Endothelial cell of umbilical vein (primary cell): ENCODE measurements at regions of chr14 and their contacts with region 1.

Region 1: GRCh38 chr14:90903101-90903500 is 86.9 kb upstream of the TTC7B start:
- DNase-seq: peak; percentile 72
- H3K4me3 ChIP-seq: no peak overlapping the region
- H3K27ac ChIP-seq: no peak overlapping the region
- H3K4me1 ChIP-seq: no peaks in the 10 kb centered on the region
- H3K27me3 ChIP-seq: no peaks in the 10 kb centered on the region
- CTCF ChIP-seq: peak; percentile 59 to 66
- POLR2A ChIP-seq: no peak

Region 2: GRCh38 chr14:90301668-90302090 is 601.4 kb before region 1 on chr14:
- CTCF ChIA-PET with region 1: interaction called, 19 read pairs
- POLR2A ChIA-PET with region 1: no interaction called
- dilution Hi-C with region 1: no loop called
- intact Hi-C with region 1: no loop called
- DNase-seq: peak; percentile 76
- H3K4me3 ChIP-seq: no peak overlapping the region
- H3K27ac ChIP-seq: no peak overlapping the region
- H3K4me1 ChIP-seq: no peaks in the 10 kb centered on the region
- H3K27me3 ChIP-seq: no peaks in the 10 kb centered on the region
- CTCF ChIP-seq: peak; percentile 22 to 41
- POLR2A ChIP-seq: no peak

Region 3: GRCh38 chr14:90815822-90816700 is 87.0 kb before region 1 on chr14 and contains the start of gene TTC7B:
- CTCF ChIA-PET with region 1: interaction called, 10 read pairs
- POLR2A ChIA-PET with region 1: no interaction called
- dilution Hi-C with region 1: no loop called
- intact Hi-C with region 1: no loop called
- DNase-seq: no peak
- H3K4me3 ChIP-seq: peak within 1 kb of the TSS; percentile 70 to 95 (median 94)
- H3K27ac ChIP-seq: peak within 1 kb of the TSS; percentile 41
- H3K4me1 ChIP-seq: peaks cover 9% of the 10 kb centered on the region
- H3K27me3 ChIP-seq: no peaks in the 10 kb centered on the region
- CTCF ChIP-seq: peak in 1 of 2 donors; percentile 47
- POLR2A ChIP-seq: no peak
- total RNA-seq, gene TTC7B: 76.5 and 86.4 TPM in 2 replicates

Region 4: GRCh38 chr14:91060351-91061055 is 157.4 kb after region 1 on chr14 and contains the start of gene RPS6KA5:
- CTCF ChIA-PET with region 1: interaction called, 43 read pairs
- POLR2A ChIA-PET with region 1: no interaction called
- dilution Hi-C with region 1: no loop called
- intact Hi-C with region 1: loop called (anchors 1 kb)
- DNase-seq: peak; percentile 100
- H3K4me3 ChIP-seq: peak within 1 kb of the TSS; percentile 68 to 100 (median 71)
- H3K27ac ChIP-seq: peak within 1 kb of the TSS; percentile 75
- H3K4me1 ChIP-seq: peaks cover 22% of the 10 kb centered on the region
- H3K27me3 ChIP-seq: no peaks in the 10 kb centered on the region
- CTCF ChIP-seq: no peak
- POLR2A ChIP-seq: peak; percentile 41
- total RNA-seq, gene RPS6KA5: 5.4 and 8.8 TPM in 2 replicates

Region 5: GRCh38 chr14:91138511-91139359 is 235.6 kb after region 1 on chr14:
- CTCF ChIA-PET with region 1: interaction called, 37 read pairs
- POLR2A ChIA-PET with region 1: no interaction called
- dilution Hi-C with region 1: no loop called
- intact Hi-C with region 1: loop called (anchors 1 kb)
- DNase-seq: peak; percentile 82
- H3K4me3 ChIP-seq: no peak overlapping the region
- H3K27ac ChIP-seq: no peak overlapping the region
- H3K4me1 ChIP-seq: peaks cover 22% of the 10 kb centered on the region
- H3K27me3 ChIP-seq: no peaks in the 10 kb centered on the region
- CTCF ChIP-seq: peak; percentile 45 to 52
- POLR2A ChIP-seq: no peak

Region 6: DNA sequence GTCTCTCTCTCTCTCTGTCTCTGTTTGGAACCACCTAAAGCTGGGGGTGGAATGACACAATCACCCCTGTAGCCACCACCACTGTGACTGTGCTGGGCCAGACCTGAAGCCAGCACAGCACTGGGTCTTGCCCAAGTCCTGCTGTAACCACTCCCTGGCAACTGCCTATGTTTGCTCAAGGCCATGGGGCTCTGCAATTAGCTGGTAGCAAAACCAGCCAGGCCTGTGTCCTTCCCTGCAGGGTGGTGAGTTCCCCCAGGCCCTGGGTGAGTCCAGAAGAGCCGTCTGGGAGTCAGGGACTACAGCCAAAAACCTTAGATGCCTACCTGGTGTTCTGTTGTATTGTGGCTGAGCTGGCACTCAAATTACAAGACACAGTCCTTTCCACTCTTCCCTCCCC is 261.6 kb after region 1 on chr14:
- CTCF ChIA-PET with region 1: interaction called, 388 read pairs
- POLR2A ChIA-PET with region 1: no interaction called
- dilution Hi-C with region 1: loop called (anchors 10 kb)
- intact Hi-C with region 1: no loop called
- DNase-seq: no peak
- H3K4me3 ChIP-seq: no peak overlapping the region
- H3K27ac ChIP-seq: no peak overlapping the region
- H3K4me1 ChIP-seq: no peaks in the 10 kb centered on the region
- H3K27me3 ChIP-seq: no peaks in the 10 kb centered on the region
- CTCF ChIP-seq: no peak
- POLR2A ChIP-seq: no peak